Endothelial cell of umbilical vein (primary cell): ENCODE measurements at regions of chr20 and their contacts with region 1.

Region 1: GRCh38 chr20:62668441-62669027 is 26.2 kb downstream of the SLCO4A1 start:
- DNase-seq: peak; percentile 76
- H3K4me3 ChIP-seq: no peak overlapping the region
- H3K27ac ChIP-seq: no peak overlapping the region
- H3K4me1 ChIP-seq: peaks cover 13% of the 10 kb centered on the region
- H3K27me3 ChIP-seq: no peaks in the 10 kb centered on the region
- CTCF ChIP-seq: peak; percentile 87 to 91
- POLR2A ChIP-seq: no peak

Region 2: GRCh38 chr20:62782149-62782892 is 113.8 kb after region 1 on chr20:
- CTCF ChIA-PET with region 1: interaction called, 7 read pairs
- POLR2A ChIA-PET with region 1: no interaction called
- dilution Hi-C with region 1: no loop called
- intact Hi-C with region 1: loop called (anchors 2 kb)
- DNase-seq: no peak
- H3K4me3 ChIP-seq: no peak overlapping the region
- H3K27ac ChIP-seq: no peak overlapping the region
- H3K4me1 ChIP-seq: peaks cover 5% of the 10 kb centered on the region
- H3K27me3 ChIP-seq: no peaks in the 10 kb centered on the region
- CTCF ChIP-seq: no peak
- POLR2A ChIP-seq: no peak

Region 3: GRCh38 chr20:62808211-62808865 is 139.8 kb after region 1 on chr20:
- CTCF ChIA-PET with region 1: interaction called, 19 read pairs
- POLR2A ChIA-PET with region 1: no interaction called
- dilution Hi-C with region 1: no loop called
- intact Hi-C with region 1: loop called (anchors 1 kb)
- DNase-seq: peak; percentile 44
- H3K4me3 ChIP-seq: no peak overlapping the region
- H3K27ac ChIP-seq: no peak overlapping the region
- H3K4me1 ChIP-seq: peaks cover 11% of the 10 kb centered on the region
- H3K27me3 ChIP-seq: no peaks in the 10 kb centered on the region
- CTCF ChIP-seq: peak; percentile 78 to 93
- POLR2A ChIP-seq: no peak